B cell (primary cell): ENCODE measurements at regions of chr22 and their contacts with region 1.

Region 1: DNA sequence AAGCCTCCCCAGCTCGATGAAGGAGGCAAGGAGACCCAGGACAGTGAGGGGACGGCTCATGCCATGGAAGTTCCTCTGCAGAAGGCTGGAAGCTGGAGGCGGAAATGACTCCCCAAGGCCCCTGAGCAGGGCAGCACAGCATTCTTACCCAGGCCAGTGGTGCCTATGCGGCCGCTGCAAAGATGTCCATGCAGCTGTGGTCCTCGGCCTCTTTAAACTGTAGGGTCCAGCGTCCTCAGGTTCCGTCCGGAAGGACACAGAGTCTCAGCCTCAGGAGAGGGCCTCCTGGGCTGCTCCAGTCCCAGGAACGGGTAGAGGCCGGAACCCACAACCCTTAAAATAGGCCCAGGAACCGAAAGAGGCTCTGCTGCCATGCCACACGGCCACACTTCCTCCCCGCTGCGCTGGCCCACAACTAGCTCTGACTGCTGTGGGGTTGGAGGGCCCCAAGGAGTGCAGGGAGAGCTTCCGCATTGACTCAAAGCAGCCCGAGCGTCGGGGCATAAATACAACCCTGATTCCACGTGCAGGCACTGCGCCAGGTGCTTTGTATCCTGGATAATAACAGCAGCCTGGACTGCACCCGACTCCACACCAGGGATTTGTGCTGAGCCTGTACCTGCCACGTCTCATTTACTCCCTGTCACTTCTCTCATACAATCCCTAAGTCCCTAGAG is 5.5 kb downstream of the KIAA0930 start:
- DNase-seq: peak; percentile 80
- ATAC-seq: peak; percentile 91
- H3K4me3 ChIP-seq: peak overlapping the region; percentile 11 to 56 (median 29)
- H3K4me3 Mint-ChIP-seq: peak overlapping the region; percentile 85
- H3K27ac ChIP-seq: peak overlapping the region; percentile 56 to 80
- H3K27ac Mint-ChIP-seq: peak overlapping the region; percentile 93
- H3K4me1 ChIP-seq: peaks cover 50 to 64% of the 10 kb centered on the region in 2 donors
- H3K4me1 Mint-ChIP-seq: peaks cover 84% of the 10 kb centered on the region
- H3K27me3 ChIP-seq: no peaks in the 10 kb centered on the region
- H3K27me3 Mint-ChIP-seq: no peaks in the 10 kb centered on the region
- CTCF ChIP-seq: no peak

Region 2: DNA sequence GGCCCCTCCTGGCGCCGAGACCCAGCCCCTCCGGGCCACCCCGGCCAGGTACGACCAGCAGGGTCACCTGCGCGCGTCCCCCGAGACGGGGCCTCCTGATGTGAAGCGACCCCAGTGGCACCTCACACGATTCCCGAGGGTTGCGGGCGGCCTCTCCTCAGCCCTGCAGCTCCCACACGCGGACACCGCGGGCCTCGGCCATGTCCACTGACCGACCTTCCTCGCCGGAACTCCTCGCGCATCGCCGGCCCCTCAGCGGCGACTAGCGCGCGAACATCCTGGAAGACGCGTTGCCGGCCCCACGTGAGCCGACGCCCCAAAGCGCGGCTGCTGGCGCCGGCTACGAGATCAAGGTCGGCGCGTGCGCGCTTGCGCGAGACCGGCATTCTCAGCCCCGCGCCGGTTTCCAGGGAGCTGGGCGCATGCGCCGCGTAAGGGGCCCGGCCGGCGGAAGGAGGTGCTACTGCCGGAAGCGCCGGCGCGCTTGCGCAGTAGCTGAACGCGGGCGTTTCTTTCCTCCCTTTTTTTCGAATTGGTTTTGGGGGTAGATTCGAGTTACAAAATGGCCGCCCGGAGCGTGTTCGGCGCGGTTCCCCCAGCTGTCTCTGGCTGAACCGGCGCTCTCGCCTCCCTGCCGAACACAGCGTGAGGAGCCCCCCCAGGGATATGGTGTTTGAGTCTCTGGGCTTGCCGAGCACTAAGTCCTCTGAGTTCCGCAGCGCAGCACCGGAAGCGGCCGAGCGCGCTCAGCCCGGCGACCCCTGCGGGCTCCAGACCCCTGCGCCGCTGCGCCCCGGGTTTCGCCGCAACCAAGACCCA is 71.6 kb before region 1 on chr22 and contains the start of gene NUP50:
- CTCF ChIA-PET with region 1: interaction called, 6 read pairs
- POLR2A ChIA-PET with region 1: interaction called, 4 read pairs
- intact Hi-C with region 1: loop called (anchors 1 kb)
- DNase-seq: peak; percentile 99
- ATAC-seq: peak; percentile 79
- H3K4me3 ChIP-seq: peak within 1 kb of the TSS; percentile 76 to 89 (median 82)
- H3K4me3 Mint-ChIP-seq: peak within 1 kb of the TSS; percentile 92
- H3K27ac ChIP-seq: peak within 1 kb of the TSS; percentile 81 to 94
- H3K27ac Mint-ChIP-seq: peak within 1 kb of the TSS; percentile 94
- H3K4me1 ChIP-seq: peaks cover 19 to 23% of the 10 kb centered on the region in 2 donors
- H3K4me1 Mint-ChIP-seq: peaks cover 47% of the 10 kb centered on the region
- H3K27me3 ChIP-seq: no peaks in the 10 kb centered on the region
- H3K27me3 Mint-ChIP-seq: no peaks in the 10 kb centered on the region
- CTCF ChIP-seq: no peak
- total RNA-seq, gene NUP50: 105 and 108 TPM in 2 replicates

Region 3: DNA sequence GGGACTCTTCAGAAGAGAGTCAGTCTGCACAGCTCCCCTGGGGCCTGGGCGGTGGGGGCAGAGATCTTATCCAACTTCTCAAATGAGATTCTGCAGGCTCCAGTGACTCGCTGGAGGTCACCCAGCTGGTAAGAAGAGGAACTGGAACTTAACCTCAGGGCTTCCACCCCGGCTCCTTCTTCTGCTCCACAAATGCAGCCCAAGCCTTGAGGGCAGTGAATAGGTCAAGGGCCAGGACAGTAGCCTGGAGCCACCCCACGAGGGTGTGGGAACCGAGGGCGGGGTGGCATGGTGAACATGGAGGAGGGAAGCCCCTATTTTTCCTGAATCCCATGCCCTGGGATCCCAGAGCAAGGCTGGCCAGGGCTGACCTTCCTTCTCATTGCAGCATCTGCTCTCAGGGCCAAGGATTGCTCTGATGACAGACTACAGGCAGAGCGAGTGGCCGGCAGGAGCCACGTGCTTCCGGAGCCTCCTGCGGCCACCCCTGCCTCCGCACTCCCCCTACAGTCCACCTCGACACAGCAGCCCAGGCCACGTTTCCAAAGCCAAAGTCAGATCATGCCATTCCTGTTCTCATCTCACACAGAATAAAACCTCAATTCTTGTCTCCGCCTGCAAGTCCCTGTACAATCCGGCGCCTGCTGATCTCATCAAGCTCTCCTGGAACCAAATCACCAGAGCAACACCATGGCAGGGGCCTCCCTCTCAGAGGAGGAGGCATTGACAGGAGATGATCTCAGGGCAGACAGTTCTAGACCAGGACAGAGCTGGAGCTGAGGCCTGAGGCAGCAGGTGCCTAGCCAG is 28.4 kb after region 1 on chr22:
- CTCF ChIA-PET with region 1: interaction called, 13 read pairs
- POLR2A ChIA-PET with region 1: interaction called, 11 read pairs
- intact Hi-C with region 1: loop called (anchors 1 kb)
- DNase-seq: peak; percentile 92
- ATAC-seq: peak; percentile 97
- H3K4me3 ChIP-seq: peak overlapping the region in 2 of 5 experiments; percentile 16 to 56
- H3K4me3 Mint-ChIP-seq: peak overlapping the region; percentile 87
- H3K27ac ChIP-seq: no peak overlapping the region
- H3K27ac Mint-ChIP-seq: peak overlapping the region; percentile 78
- H3K4me1 ChIP-seq: peaks cover 39 to 47% of the 10 kb centered on the region in 2 donors
- H3K4me1 Mint-ChIP-seq: peaks cover 53% of the 10 kb centered on the region
- H3K27me3 ChIP-seq: peaks cover 0 to 3% (median under 1%) of the 10 kb centered on the region in 4 experiments
- H3K27me3 Mint-ChIP-seq: no peaks in the 10 kb centered on the region
- CTCF ChIP-seq: no peak